ENCODE measurements at regions of chr11 and their contacts with region 1.

Region 1: DNA sequence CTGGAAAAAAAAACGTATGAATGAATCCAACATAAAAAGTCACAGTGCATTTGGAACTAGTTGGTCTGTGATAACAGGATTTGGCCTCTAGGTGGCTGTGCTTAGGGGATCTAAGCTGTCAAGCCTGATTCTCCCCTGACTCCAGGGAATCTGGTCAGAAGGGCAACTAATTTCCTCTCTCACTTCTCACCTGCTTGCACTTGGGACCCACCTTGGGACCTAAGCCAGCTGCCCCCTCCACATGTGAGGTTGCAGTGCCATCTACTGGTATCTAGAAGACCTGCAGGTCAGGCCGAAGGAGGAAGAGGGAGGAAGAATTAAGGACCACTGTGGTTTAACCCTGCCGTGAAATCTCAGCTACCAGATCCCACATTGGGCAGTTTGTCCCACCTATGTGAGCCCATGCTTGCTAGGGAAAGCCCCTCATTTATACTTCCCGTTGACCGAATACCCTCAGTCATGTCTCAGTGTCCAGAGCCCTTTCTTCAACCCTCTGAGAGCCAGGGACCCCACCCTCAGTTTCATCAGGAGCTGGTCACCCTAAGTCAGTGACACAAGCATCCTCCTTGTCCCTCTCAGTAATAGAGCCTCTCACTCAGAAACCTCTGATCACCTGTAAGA is 33.2 kb upstream of the CAVIN3 start:
- DNase-seq: no peak
- H3K4me3 ChIP-seq: no peak overlapping the region
- H3K27ac ChIP-seq: no peak overlapping the region
- H3K27me3 ChIP-seq: no peaks in the 10 kb centered on the region
- CTCF ChIP-seq: peak; percentile 98

Region 2: GRCh38 chr11:6234387-6235107 is 118.9 kb before region 1 on chr11 and contains the start of gene FHIP1B:
- CTCF ChIA-PET with region 1: interaction called, 10 read pairs
- POLR2A ChIA-PET with region 1: no interaction called
- DNase-seq: peak; percentile 100
- H3K4me3 ChIP-seq: peak within 1 kb of the TSS; percentile 99
- H3K27ac ChIP-seq: peak within 1 kb of the TSS; percentile 52
- H3K27me3 ChIP-seq: peaks cover 3% of the 10 kb centered on the region
- CTCF ChIP-seq: no peak
- polyA plus RNA-seq, gene FHIP1B: 18.9 and 19.8 TPM in 2 replicates

Region 3: GRCh38 chr11:6298605-6299004 is 54.9 kb before region 1 on chr11:
- CTCF ChIA-PET with region 1: interaction called, 34 read pairs
- POLR2A ChIA-PET with region 1: no interaction called
- DNase-seq: no peak
- H3K4me3 ChIP-seq: no peak overlapping the region
- H3K27ac ChIP-seq: no peak overlapping the region
- H3K27me3 ChIP-seq: no peaks in the 10 kb centered on the region
- CTCF ChIP-seq: peak; percentile 53

Region 4: GRCh38 chr11:6315811-6316425 is 37.6 kb before region 1 on chr11:
- CTCF ChIA-PET with region 1: interaction called, 137 read pairs
- POLR2A ChIA-PET with region 1: interaction called, 6 read pairs
- DNase-seq: no peak
- H3K4me3 ChIP-seq: no peak overlapping the region
- H3K27ac ChIP-seq: no peak overlapping the region
- H3K27me3 ChIP-seq: no peaks in the 10 kb centered on the region
- CTCF ChIP-seq: peak; percentile 92

Region 5: DNA sequence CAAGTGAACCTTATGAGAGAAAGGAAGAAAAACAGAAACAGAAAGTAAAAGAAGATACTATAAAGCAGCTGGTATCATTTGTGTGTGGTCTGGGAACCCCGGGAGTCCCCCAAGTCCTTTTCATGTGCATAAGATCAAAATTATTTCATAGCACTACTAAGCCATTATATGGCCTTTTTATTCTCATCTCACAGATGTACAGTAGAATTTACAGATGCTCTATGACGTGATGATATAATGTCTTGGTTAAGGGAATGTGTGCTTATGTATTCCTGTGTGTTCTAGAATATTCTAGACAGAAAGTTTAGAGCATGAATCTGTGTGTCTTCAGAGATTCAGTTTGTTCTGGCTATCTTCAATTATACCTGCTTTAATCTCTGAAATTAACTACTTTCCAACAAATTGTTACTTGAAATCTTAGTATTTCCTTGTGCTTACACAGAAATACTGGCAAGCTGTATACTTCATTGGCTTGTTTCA is 274.3 kb after region 1 on chr11:
- CTCF ChIA-PET with region 1: no interaction called
- POLR2A ChIA-PET with region 1: no interaction called
- DNase-seq: no peak
- H3K4me3 ChIP-seq: no peak overlapping the region
- H3K27ac ChIP-seq: no peak overlapping the region
- H3K27me3 ChIP-seq: no peaks in the 10 kb centered on the region
- CTCF ChIP-seq: no peak

Measured in AG04450 (cell line).